A673 (cell line): ENCODE measurements at regions of chr17 and their contacts with region 1.

Region 1: DNA sequence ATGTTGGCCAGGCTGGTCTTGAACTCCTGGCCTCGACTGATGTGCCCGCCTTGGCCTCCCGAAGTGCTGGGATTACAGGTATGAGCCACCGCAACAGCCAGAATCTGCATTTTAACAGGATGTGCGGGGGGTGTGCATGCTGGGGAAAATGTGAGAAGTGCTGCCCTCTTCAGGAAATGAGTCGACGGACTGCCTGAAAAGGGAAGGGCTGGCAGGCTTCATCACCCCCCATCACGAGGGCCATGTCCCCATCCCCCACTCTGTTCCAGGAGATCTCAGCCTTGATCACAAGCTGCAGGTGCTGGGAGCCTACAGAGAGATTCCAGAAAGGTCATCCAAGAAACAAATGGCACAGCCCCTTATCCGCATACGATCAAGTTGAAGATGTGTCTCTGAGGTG is 195.3 kb upstream of the RPL38 start:
- DNase-seq: peak; percentile 29
- H3K4me3 ChIP-seq: no peak overlapping the region
- H3K27ac ChIP-seq: no peak overlapping the region
- H3K4me1 ChIP-seq: peaks cover 11% of the 10 kb centered on the region
- H3K27me3 ChIP-seq: peaks cover 14% of the 10 kb centered on the region
- CTCF ChIP-seq: peak; percentile 55

Region 2: GRCh38 chr17:73978547-73978946 is 29.6 kb before region 1 on chr17:
- CTCF ChIA-PET with region 1: interaction called, 10 read pairs
- POLR2A ChIA-PET with region 1: no interaction called
- intact Hi-C with region 1: no loop called
- DNase-seq: no peak
- H3K4me3 ChIP-seq: no peak overlapping the region
- H3K27ac ChIP-seq: no peak overlapping the region
- H3K4me1 ChIP-seq: peaks cover 6% of the 10 kb centered on the region
- H3K27me3 ChIP-seq: no peaks in the 10 kb centered on the region
- CTCF ChIP-seq: no peak

Region 3: DNA sequence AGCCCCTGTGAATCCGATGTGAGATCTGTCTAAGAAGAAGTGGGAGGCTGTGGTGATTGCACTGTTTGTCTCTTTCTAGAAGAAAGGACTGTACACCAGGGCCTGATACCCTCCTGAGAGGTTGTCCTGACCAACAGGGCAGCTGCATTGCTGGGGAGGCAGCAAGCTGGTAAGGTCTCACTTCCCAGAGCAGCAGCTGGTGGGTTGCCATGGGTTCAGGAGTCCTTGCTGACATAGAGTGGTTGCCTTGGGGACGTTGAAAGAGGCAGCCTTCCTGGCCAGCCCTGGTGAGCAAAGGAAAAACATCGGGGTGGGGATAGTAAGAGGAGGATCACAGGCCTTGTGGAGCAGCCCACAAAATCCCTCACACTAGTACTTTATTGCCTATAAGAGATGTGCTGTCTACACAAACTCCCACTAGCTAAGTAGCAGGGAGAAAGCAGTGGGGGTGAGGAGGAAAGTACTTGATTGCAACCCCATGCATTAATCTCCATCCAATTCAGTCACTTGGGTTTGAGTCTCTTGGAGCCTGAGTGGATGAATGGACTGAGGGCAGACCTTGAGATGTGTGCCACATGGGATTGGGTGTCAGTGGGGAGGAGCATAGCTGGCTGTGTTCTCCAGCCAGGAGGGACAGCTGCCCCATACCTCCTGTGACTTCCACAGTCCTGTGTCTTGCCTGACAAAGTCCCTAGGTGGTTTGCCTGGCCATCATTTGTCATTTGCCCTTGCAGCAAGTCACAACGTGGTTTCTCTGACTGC is 51.5 kb after region 1 on chr17:
- CTCF ChIA-PET with region 1: no interaction called
- POLR2A ChIA-PET with region 1: no interaction called
- intact Hi-C with region 1: loop called (anchors 5 kb)
- DNase-seq: no peak
- H3K4me3 ChIP-seq: no peak overlapping the region
- H3K27ac ChIP-seq: no peak overlapping the region
- H3K4me1 ChIP-seq: no peaks in the 10 kb centered on the region
- H3K27me3 ChIP-seq: no peaks in the 10 kb centered on the region
- CTCF ChIP-seq: no peak

Region 4: GRCh38 chr17:74212913-74213791 is 205.0 kb after region 1 on chr17 and contains the start of gene TTYH2:
- CTCF ChIA-PET with region 1: no interaction called
- POLR2A ChIA-PET with region 1: no interaction called
- intact Hi-C with region 1: no loop called
- DNase-seq: peak; percentile 95
- H3K4me3 ChIP-seq: peak within 1 kb of the TSS; percentile 66
- H3K27ac ChIP-seq: peak within 1 kb of the TSS; percentile 67
- H3K4me1 ChIP-seq: peaks cover 21% of the 10 kb centered on the region
- H3K27me3 ChIP-seq: no peaks in the 10 kb centered on the region
- CTCF ChIP-seq: peak; percentile 31; the same call in 1 of the 2 replicates
- total RNA-seq, gene TTYH2: 13.7 and 15.4 TPM in 2 replicates